Astrocyte of the cerebellum (primary cell): ENCODE measurements at regions of chrX and their contacts with region 1.

Region 1: DNA sequence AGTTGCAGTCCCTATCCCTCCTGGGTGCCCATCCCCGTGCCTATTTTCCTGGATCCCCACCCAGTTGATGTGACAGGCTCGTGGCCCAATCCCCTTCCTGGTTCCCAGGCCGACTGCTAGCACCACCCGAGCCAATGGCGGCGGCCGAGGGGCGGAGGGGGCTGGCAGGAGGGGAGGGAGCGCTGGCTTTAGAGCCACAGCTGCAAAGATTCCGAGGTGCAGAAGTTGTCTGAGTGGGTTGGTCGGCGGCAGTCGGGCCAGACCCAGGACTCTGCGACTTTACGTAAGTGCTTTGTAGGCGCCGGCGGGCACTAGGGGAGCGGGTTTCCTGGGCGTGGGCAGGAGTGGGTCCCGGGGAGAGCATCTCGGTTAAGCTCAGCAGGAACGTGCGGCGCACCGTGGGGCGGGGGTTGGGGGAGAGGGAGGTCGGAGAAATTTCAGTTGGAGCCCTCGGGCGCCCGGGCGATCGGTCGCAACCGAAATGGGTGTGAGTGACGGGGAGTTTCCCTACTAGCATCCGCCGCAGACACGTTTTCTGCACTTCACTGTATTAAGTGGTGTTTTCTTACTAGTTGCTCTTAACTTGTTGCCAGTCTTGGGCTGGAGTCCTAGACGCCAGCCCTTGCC is at the start of gene PLS3:
- DNase-seq: peak; percentile 53
- H3K4me3 ChIP-seq: peak within 1 kb of the TSS; percentile 68
- CTCF ChIP-seq: no peak

Region 2: DNA sequence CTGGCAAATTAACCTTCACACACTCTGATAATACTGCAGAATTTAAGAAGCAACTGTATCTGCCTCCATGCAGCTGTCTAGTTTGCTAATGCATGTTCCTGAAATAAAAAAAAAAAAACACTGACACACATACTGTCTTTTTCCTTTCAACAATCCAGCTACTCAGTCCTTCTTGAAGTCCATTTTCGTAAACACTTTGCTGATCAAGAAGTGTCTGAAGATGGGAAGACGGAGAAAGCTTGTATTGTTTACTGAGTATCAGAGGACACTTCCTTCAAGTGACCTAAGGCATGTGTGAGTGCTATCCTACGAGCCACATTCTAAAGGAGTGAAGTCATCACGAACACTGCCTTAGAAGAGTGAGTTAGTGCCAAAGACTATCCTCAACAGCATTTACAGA is 188.9 kb before region 1 on chrX:
- in situ Hi-C with region 1: loop called (anchors 25 kb)
- DNase-seq: no peak
- H3K4me3 ChIP-seq: no peak overlapping the region
- CTCF ChIP-seq: no peak